CD4-positive, alpha-beta T cell (primary cell): ENCODE measurements at regions of chr7 and their contacts with region 1.

Region 1: GRCh38 chr7:151057989-151058780 is 488 bp upstream of the CDK5 start:
- DNase-seq: peak; percentile 92 to 100 (median 96)
- ATAC-seq: peak; percentile 94
- H3K4me3 ChIP-seq: peak overlapping the region; percentile 89
- H3K4me3 Mint-ChIP-seq: peak overlapping the region; percentile 96
- H3K27ac ChIP-seq: peak overlapping the region; percentile 69 to 71
- H3K27ac Mint-ChIP-seq: peak overlapping the region; percentile 91
- H3K4me1 ChIP-seq: peaks cover 49% of the 10 kb centered on the region
- H3K4me1 Mint-ChIP-seq: peaks cover 42% of the 10 kb centered on the region
- H3K27me3 ChIP-seq: no peaks in the 10 kb centered on the region
- H3K27me3 Mint-ChIP-seq: no peaks in the 10 kb centered on the region
- CTCF ChIP-seq: no peak

Region 2: DNA sequence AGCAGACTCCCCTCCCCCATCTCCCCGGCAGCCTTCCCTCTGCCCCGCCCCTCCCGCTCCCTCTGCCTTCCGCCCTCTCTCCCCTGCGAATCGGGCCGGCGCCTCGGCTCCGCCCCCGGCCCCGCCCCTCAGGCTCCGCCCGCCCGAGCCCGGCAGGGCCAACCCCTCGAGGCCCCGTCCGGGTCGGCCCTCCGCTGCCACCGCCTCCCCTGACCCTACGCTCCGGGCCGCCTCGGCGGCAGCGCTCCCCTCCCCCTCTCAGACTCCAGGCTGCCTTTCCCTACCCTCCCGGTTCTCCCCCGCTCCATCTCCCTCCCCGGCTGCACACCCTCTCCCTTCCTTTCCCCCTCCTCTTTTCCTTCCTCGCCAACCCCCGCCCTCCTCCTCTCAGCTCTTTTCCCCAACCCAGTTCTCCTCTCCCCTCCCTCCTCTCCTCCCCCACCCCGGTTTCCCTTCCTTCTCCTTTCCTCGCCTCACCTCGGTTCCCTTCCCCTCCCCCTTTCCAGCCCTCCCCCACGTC is 1286.4 kb before region 1 on chr7:
- CTCF ChIA-PET with region 1: no interaction called
- POLR2A ChIA-PET with region 1: no interaction called
- intact Hi-C with region 1: loop called in 1 of 2 experiments (anchors 5 kb)
- DNase-seq: peak; percentile 73 to 93 (median 86)
- ATAC-seq: peak; percentile 87
- H3K4me3 ChIP-seq: peak overlapping the region; percentile 67
- H3K4me3 Mint-ChIP-seq: peak overlapping the region; percentile 84
- H3K27ac ChIP-seq: no peak overlapping the region
- H3K27ac Mint-ChIP-seq: no peak overlapping the region
- H3K4me1 ChIP-seq: peaks cover 31% of the 10 kb centered on the region
- H3K4me1 Mint-ChIP-seq: peaks cover 20% of the 10 kb centered on the region
- H3K27me3 ChIP-seq: no peaks in the 10 kb centered on the region
- H3K27me3 Mint-ChIP-seq: no peaks in the 10 kb centered on the region
- CTCF ChIP-seq: no peak

Region 3: GRCh38 chr7:151080522-151081169 is 22.5 kb after region 1 on chr7 and contains the start of gene FASTK:
- CTCF ChIA-PET with region 1: interaction called, 11 read pairs
- POLR2A ChIA-PET with region 1: interaction called, 15 read pairs
- intact Hi-C with region 1: loop called (anchors 1 kb)
- DNase-seq: peak; percentile 73 to 95 (median 85)
- ATAC-seq: peak; percentile 63
- H3K4me3 ChIP-seq: peak within 1 kb of the TSS; percentile 98
- H3K4me3 Mint-ChIP-seq: peak within 1 kb of the TSS; percentile 92
- H3K27ac ChIP-seq: peak within 1 kb of the TSS; percentile 77 to 92
- H3K27ac Mint-ChIP-seq: peak within 1 kb of the TSS; percentile 85
- H3K4me1 ChIP-seq: peaks cover 52% of the 10 kb centered on the region
- H3K4me1 Mint-ChIP-seq: peaks cover 45% of the 10 kb centered on the region
- H3K27me3 ChIP-seq: no peaks in the 10 kb centered on the region
- H3K27me3 Mint-ChIP-seq: peaks cover 4% of the 10 kb centered on the region
- CTCF ChIP-seq: no peak
- total RNA-seq, gene FASTK: 82.2 to 84.2 TPM

Region 4: DNA sequence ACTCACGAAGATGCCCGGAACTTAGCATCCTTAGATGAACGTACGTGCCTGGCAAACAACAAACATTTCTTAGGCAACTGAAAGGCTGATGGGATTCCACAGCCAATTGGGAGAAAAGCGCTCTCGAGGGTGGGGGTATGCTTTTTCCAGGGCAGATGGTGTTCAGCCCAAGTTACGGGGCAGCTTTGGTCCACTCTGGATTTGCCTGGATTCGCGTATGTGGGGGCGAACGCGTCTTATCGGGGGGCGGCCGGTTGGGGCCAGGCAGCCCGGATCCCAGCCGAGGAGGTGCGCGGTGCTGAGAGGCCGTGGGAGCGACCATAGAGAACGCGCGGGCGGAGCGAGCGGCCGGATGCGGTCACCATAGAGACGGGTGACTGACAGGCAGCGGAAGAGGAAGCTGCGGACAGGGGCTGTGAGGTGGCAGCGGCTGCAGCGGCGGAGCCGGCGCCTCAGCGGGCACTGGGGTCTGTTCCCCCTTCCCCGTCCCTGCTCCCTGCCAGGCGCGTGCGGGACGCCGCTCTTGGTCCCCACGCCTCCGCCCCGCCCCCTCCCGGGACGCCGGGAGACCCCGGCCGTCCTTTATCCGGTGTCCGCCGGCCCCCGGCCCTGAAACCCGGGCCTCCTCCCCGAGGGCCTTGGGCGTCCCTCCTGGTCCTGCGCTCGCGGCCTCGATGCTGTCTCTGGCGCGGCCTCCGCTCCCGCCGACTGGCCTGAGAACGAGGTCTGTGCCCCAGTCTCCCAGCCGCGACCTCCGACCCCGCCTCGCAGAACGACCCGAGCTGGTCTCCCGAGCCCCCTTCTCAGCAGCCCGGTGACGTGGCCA is 174.1 kb after region 1 on chr7 and contains the start of gene CHPF2:
- CTCF ChIA-PET with region 1: no interaction called
- POLR2A ChIA-PET with region 1: no interaction called
- intact Hi-C with region 1: loop called in 1 of 2 experiments (anchors 2 kb)
- DNase-seq: peak; percentile 73 to 93 (median 87)
- ATAC-seq: peak; percentile 82
- H3K4me3 ChIP-seq: peak within 1 kb of the TSS; percentile 95
- H3K4me3 Mint-ChIP-seq: peak within 1 kb of the TSS; percentile 99
- H3K27ac ChIP-seq: peak within 1 kb of the TSS; percentile 61 to 74
- H3K27ac Mint-ChIP-seq: peak within 1 kb of the TSS; percentile 90
- H3K4me1 ChIP-seq: peaks cover 48% of the 10 kb centered on the region
- H3K4me1 Mint-ChIP-seq: peaks cover 45% of the 10 kb centered on the region
- H3K27me3 ChIP-seq: no peaks in the 10 kb centered on the region
- H3K27me3 Mint-ChIP-seq: no peaks in the 10 kb centered on the region
- CTCF ChIP-seq: no peak
- total RNA-seq, gene CHPF2: 29.6 to 30.5 TPM